GM12878 (cell line): ENCODE measurements at regions of chr19 and their contacts with region 1.

Region 1: DNA sequence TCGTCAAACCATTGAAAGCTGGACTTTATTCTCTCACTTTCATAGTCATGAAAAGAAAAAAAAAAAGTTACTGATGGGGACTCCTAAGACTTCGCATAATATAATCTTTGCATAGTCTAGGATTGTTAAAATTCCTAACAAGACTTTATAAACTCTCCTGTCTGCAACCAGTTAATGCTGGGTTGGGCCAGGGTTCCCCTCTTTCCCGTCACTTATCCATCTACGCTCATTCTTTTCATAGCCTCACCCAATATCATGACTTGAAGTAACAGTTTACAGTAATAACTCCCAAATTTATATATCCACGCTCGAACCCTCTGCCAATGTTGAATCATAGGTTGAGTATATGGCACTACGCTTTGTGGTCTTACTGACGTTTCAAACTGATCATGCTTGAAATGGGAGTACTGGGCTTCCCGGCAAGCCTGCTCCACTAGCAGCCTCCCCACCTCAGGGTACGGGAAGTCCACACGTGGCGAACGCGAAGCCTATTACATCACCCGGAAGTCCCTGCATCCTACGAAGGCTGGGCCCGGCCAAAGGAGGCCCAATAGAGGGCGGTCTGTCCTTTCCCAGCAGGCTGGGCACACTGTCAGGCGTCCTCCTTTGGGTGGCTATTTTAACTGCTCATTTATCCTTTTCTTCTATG is 743 bp upstream of the ZNF460 start:
- DNase-seq: peak; percentile 77
- ATAC-seq: peak; percentile 85
- H3K4me3 ChIP-seq: peak overlapping the region; percentile 86
- H3K27ac ChIP-seq: peak overlapping the region; percentile 90
- H3K4me1 ChIP-seq: peaks cover 15% of the 10 kb centered on the region
- H3K27me3 ChIP-seq: no peaks in the 10 kb centered on the region
- CTCF ChIP-seq: peak; percentile 23 to 77 (median 34); a peak in 4 of 6 replicates
- EP300 ChIP-seq: 0 out of 4 replicates have a peak, but pooled peaks of 1 of the 2 experiments have one; percentile 20
- POLR2A ChIP-seq: no peak
- RAD21 ChIP-seq: peak; percentile 55

Region 2: GRCh38 chr19:57191141-57192076 is 88.1 kb before region 1 on chr19 and contains the start of gene ZNF264:
- CTCF ChIA-PET with region 1: no interaction called
- POLR2A ChIA-PET with region 1: no interaction called
- RAD21 ChIA-PET with region 1: no interaction called
- SMC1A ChIA-PET with region 1: no interaction called
- in situ Hi-C with region 1: no loop called
- intact Hi-C with region 1: loop called (anchors 1 kb)
- DNase-seq: peak; percentile 49
- ATAC-seq: peak; percentile 99
- H3K4me3 ChIP-seq: peak within 1 kb of the TSS; percentile 83
- H3K27ac ChIP-seq: peak within 1 kb of the TSS; percentile 73
- H3K4me1 ChIP-seq: peaks cover 7% of the 10 kb centered on the region; the same call in 1 of the 2 replicates
- H3K27me3 ChIP-seq: no peaks in the 10 kb centered on the region
- CTCF ChIP-seq: 0 out of 6 replicates have a peak, but pooled peaks of 1 of the 3 experiments have one; percentile 2
- EP300 ChIP-seq: no peak
- POLR2A ChIP-seq: peak; percentile 89
- RAD21 ChIP-seq: no peak
- polyA plus RNA-seq, gene ZNF264: 0.76 to 1.2 TPM

Region 3: DNA sequence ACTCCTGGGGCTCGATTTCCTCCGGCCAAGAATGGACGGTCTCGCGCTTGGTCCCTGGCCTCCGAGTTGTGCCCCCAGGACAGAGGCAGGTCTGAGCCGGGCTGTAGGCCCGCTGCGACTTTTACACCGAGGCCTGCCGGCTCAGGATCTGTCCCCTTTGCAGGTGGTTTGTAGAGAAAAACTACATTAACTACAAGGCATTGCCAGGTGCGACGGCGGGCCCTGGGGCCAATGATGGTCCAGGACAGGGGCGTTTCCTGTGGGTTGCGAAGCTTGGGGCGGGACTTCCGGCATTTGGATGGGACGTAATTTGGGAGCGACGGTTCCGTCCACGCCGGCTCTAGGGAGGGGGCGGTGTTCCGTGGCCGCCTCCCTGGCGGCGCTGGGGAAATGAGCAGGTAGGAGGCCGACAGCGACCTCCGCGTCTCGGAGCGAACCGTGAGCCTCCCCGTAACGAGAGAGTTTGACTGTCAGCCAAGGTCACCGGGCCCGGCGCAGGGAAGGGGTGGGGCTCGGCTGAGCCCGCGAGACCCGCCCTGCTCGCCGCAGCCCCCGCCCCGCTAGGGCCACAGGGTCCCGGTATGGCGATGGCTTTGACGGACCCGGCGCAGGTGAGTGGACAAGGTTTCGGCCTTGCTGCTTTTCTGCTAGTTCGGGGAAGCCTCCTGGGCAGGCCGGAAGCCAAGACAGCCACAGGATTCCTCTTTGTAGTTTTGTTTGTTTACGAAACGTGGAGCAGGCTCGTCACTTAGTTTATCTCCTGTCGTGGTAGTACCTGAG is 39.0 kb before region 1 on chr19 and contains the start of gene ZNF805:
- CTCF ChIA-PET with region 1: no interaction called
- POLR2A ChIA-PET with region 1: no interaction called
- RAD21 ChIA-PET with region 1: no interaction called
- SMC1A ChIA-PET with region 1: no interaction called
- in situ Hi-C with region 1: no loop called
- intact Hi-C with region 1: loop called (anchors 1 kb)
- DNase-seq: peak; percentile 74
- ATAC-seq: peak; percentile 97
- H3K4me3 ChIP-seq: peak within 1 kb of the TSS; percentile 83
- H3K27ac ChIP-seq: peak within 1 kb of the TSS; percentile 73
- H3K4me1 ChIP-seq: peaks cover 9% of the 10 kb centered on the region
- H3K27me3 ChIP-seq: no peaks in the 10 kb centered on the region
- CTCF ChIP-seq: no peak; a peak in 1 of 6 replicates
- EP300 ChIP-seq: no peak
- POLR2A ChIP-seq: peak; percentile 92
- RAD21 ChIP-seq: no peak
- polyA plus RNA-seq, gene ZNF805: 0.31 to 0.42 TPM

Region 4: DNA sequence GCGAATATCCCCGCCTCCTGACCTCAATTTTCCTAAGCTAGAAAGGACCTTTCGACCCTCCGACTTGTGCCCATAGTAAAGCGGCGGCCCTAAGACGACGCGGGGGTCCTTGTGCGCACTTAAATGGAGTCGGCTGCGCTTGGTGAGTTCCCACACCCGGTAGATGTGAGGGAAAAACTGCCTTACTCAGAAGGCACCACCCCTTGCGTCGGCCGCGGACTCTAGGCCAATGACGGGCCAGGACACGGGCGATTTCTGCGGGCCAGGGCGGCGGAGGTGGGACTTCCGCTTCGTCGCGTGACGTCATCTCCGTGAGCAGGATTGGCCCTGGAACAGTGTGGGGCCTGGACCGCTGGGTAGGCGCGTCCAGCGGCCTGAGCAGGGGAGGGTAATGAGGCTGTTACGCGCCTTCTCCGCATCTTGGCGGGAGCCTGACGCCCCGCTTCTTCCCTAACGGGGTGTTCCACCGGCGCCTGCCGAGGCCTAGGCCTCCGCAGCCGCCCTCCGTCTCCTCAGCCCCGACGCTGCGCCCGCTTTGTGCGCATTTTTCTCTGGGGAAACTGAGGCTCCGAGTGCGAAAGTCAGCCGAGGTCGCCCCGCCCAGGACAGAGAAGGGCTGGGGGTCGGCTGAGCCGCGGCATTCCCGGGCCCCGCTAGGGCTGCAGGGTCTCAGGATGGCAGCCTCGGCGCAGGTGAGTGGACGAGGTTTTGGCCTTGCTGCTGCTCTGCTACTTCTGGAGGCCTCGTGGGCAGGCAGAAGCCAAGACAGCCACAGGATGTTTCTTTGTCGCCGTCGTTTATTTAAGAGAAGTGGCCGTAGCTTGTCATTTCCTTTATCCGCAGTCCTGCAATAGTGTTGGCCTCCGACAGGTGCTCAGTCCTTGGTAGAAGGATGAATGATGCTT is 40.9 kb after region 1 on chr19 and contains the start of gene ZNF543:
- CTCF ChIA-PET with region 1: no interaction called
- POLR2A ChIA-PET with region 1: no interaction called
- RAD21 ChIA-PET with region 1: interaction called, 3 read pairs
- SMC1A ChIA-PET with region 1: interaction called, 3 read pairs
- in situ Hi-C with region 1: no loop called
- intact Hi-C with region 1: loop called (anchors 1 kb)
- DNase-seq: peak; percentile 77
- ATAC-seq: peak; percentile 98
- H3K4me3 ChIP-seq: peak within 1 kb of the TSS; percentile 86
- H3K27ac ChIP-seq: peak within 1 kb of the TSS; percentile 90
- H3K4me1 ChIP-seq: peaks cover 3% of the 10 kb centered on the region; the same call in 1 of the 2 replicates
- H3K27me3 ChIP-seq: no peaks in the 10 kb centered on the region
- CTCF ChIP-seq: no peak
- EP300 ChIP-seq: no peak
- POLR2A ChIP-seq: peak; percentile 93
- RAD21 ChIP-seq: no peak
- polyA plus RNA-seq, gene ZNF543: 0.53 to 0.74 TPM

Region 5: DNA sequence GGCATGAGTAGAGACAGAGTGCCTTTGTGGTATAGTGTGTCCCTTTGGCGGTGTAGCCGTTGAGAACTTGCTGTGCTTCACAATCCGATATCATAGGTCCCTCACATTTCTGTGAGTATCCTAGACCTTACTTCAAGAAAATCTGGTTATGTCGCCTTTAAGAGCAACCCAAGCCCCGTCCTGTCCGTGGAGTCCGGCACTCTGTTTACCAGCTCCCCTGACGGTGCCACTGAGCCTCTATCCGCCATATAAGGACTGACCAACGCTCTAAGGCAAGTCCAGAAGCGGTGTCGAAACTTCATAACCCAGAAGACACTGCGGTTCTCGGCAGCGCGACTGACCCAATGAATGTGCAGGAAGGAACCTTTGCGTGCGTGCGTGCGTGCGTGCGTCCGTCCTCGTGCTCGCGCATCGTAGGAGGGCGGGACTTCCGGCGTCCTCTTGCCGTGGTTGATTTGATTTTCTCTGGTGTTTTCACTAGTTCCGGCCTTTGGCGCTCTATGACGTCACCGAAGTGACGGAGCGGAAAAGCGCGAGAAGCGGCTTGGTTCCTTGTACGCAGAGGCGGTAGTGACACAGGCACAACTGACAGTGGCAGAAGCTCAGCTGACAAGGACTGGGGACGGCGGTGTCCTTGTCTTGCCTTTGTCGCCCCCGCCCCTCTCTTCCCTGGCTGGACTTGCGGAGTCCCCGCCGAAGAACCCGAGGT is 83.6 kb after region 1 on chr19 and contains the starts of genes TRAPPC2B and ZNF547:
- CTCF ChIA-PET with region 1: no interaction called
- POLR2A ChIA-PET with region 1: no interaction called
- RAD21 ChIA-PET with region 1: no interaction called
- SMC1A ChIA-PET with region 1: no interaction called
- in situ Hi-C with region 1: no loop called
- intact Hi-C with region 1: loop called (anchors 1 kb)
- DNase-seq: peak; percentile 98
- ATAC-seq: peak; percentile 100
- H3K4me3 ChIP-seq: peak within 1 kb of the TSS; percentile 72
- H3K27ac ChIP-seq: peak within 1 kb of the TSS; percentile 78
- H3K4me1 ChIP-seq: no peaks in the 10 kb centered on the region
- H3K27me3 ChIP-seq: no peaks in the 10 kb centered on the region
- CTCF ChIP-seq: no peak
- EP300 ChIP-seq: no peak; a peak in 1 of 4 replicates
- POLR2A ChIP-seq: peak; percentile 95
- RAD21 ChIP-seq: no peak
- polyA plus RNA-seq, gene TRAPPC2B: 71.0 to 86.4 TPM
- polyA plus RNA-seq, gene ZNF547: 2.3 to 3.5 TPM